Common myeloid progenitor, CD34-positive (primary cell): ENCODE measurements at regions of chrX and their contacts with region 1.

Region 1: GRCh38 chrX:76202471-76202870 is 29.6 kb downstream of the PBDC1 start:
- DNase-seq: no peak
- H3K4me3 ChIP-seq: no peak overlapping the region
- H3K27ac ChIP-seq: no peak overlapping the region
- H3K4me1 ChIP-seq: no peaks in the 10 kb centered on the region
- H3K27me3 ChIP-seq: no peaks in the 10 kb centered on the region

Region 2: GRCh38 chrX:76064825-76065224 is 137.6 kb before region 1 on chrX:
- CTCF ChIA-PET with region 1: no interaction called
- POLR2A ChIA-PET with region 1: interaction called, 13 read pairs
- DNase-seq: no peak
- H3K4me3 ChIP-seq: no peak overlapping the region
- H3K27ac ChIP-seq: no peak overlapping the region
- H3K4me1 ChIP-seq: no peaks in the 10 kb centered on the region
- H3K27me3 ChIP-seq: no peaks in the 10 kb centered on the region

Region 3: DNA sequence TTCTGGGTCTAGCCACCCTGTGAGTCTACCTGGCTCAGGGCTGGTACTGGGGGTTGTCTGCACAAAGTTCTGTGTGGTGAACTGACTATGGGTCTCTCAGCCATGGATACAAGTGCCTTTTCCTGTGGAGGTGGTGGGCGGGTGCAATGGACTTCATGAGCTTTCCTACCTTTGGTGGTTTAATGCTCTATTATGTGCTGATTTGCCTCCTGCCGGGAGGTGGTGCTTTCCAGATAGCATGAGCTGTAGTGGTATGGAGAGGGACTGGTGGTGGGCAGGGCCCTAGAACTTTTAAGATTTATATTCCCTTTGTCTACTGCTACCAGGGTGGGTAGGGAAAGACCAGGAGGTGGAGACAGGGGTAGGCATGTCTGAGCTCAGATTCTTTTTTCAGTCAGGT is 18.4 kb after region 1 on chrX:
- CTCF ChIA-PET with region 1: no interaction called
- POLR2A ChIA-PET with region 1: no interaction called
- DNase-seq: no peak
- H3K4me3 ChIP-seq: no peak overlapping the region
- H3K27ac ChIP-seq: no peak overlapping the region
- H3K4me1 ChIP-seq: no peaks in the 10 kb centered on the region
- H3K27me3 ChIP-seq: peaks cover 0 to 3% (median 0%) of the 10 kb centered on the region in 5 experiments